CD14-positive monocyte (primary cell): ENCODE measurements at regions of chrX and their contacts with region 1.

Region 1: GRCh38 chrX:19739683-19740082 is 147.7 kb downstream of the SH3KBP1 start:
- DNase-seq: peak; percentile 44 to 72 (median 67)
- H3K4me3 ChIP-seq: no peak overlapping the region
- H3K4me3 Mint-ChIP-seq: no peak overlapping the region
- H3K27ac ChIP-seq: peak overlapping the region in 1 of 2 donors; percentile 20
- H3K27ac Mint-ChIP-seq: peak overlapping the region in 1 of 7 donors; percentile 42
- H3K4me1 ChIP-seq: peaks cover 8% of the 10 kb centered on the region in 2 donors
- H3K4me1 Mint-ChIP-seq: peaks cover 10% of the 10 kb centered on the region
- H3K27me3 ChIP-seq: no peaks in the 10 kb centered on the region
- H3K27me3 Mint-ChIP-seq: peaks cover 0 to 5% (median 0%) of the 10 kb centered on the region in 3 donors
- CTCF ChIP-seq: peak; percentile 70

Region 2: DNA sequence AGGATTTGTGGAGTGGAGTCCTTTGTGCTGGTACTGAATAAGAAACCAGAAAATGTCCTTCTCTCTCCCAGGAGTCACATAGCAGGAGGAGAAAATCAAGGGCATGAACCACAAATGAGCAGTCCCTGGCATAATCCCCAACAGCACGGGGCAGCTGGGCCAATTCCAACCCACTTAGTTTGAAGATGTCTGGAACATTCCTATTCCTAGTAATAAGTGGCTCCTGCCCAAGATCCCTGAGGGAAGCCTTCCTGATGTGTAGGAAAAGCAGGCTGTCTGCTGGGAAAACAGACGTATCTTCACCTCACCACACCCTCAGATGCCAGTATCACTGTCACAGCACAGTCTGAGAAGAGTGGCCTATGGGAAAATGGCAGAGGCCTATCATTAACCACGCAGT is 41.6 kb before region 1 on chrX:
- intact Hi-C with region 1: no loop called
- DNase-seq: no peak
- H3K4me3 ChIP-seq: no peak overlapping the region
- H3K4me3 Mint-ChIP-seq: no peak overlapping the region
- H3K27ac ChIP-seq: peak overlapping the region in 1 of 2 donors; percentile 32
- H3K27ac Mint-ChIP-seq: no peak overlapping the region
- H3K4me1 ChIP-seq: no peaks in the 10 kb centered on the region
- H3K4me1 Mint-ChIP-seq: no peaks in the 10 kb centered on the region
- H3K27me3 ChIP-seq: no peaks in the 10 kb centered on the region
- H3K27me3 Mint-ChIP-seq: peaks cover 0 to 6% (median 0%) of the 10 kb centered on the region in 3 donors
- CTCF ChIP-seq: no peak

Region 3: GRCh38 chrX:19785647-19786046 is 46.0 kb after region 1 on chrX:
- intact Hi-C with region 1: loop called in 1 of 2 experiments (anchors 5 kb)
- DNase-seq: peak; percentile 3 to 66 (median 21)
- H3K4me3 ChIP-seq: no peak overlapping the region
- H3K4me3 Mint-ChIP-seq: no peak overlapping the region
- H3K27ac ChIP-seq: peak overlapping the region in 1 of 2 donors; percentile 8
- H3K27ac Mint-ChIP-seq: peak overlapping the region in 2 of 7 donors; percentile 21 to 37
- H3K4me1 ChIP-seq: peaks cover 9 to 13% of the 10 kb centered on the region in 2 donors
- H3K4me1 Mint-ChIP-seq: peaks cover 25% of the 10 kb centered on the region
- H3K27me3 ChIP-seq: no peaks in the 10 kb centered on the region
- H3K27me3 Mint-ChIP-seq: peaks cover 0 to 5% (median 0%) of the 10 kb centered on the region in 3 donors
- CTCF ChIP-seq: no peak

Region 4: DNA sequence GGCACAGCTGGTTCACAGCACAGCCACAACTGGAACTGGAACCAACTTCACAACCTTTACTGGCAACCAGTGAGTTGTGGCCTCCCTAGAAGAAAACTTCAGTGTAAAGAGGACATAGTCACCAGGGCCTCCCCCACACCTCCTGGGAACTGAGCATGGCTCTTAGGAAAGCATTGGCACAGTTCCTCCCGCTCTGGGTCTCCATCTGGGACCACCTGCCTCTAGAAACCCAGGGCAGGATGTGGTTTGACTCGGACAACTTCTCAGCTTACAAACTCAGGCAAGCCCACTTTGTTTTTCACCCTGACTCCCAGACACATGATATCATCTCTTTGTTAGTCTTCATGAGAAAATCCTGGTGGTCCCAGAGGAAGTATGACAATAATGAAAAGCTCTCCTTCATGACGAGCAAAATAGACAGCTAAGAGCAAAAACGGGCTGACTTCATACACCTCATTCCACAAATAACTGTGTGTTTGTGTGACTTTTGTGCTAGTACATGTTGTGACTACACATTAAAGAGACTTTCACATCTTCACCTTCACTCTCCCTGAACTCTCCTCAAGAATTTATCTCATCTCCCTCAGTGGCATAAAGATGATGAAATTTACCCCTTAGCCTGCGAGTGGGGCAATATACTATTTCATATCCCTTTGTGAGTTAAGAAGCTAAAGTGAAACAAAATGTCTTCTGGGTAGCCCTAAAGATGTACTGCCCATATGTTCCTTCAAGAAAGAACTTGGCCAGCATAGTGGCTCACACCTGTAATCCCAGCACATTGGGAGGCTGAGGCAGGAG is 72.3 kb after region 1 on chrX:
- intact Hi-C with region 1: loop called (anchors 10 kb)
- DNase-seq: peak in 2 of 3 donors; percentile 44
- H3K4me3 ChIP-seq: no peak overlapping the region
- H3K4me3 Mint-ChIP-seq: peak overlapping the region in 1 of 2 donors; percentile 31
- H3K27ac ChIP-seq: peak overlapping the region; percentile 55 to 66
- H3K27ac Mint-ChIP-seq: peak overlapping the region; percentile 69 to 93 (median 86)
- H3K4me1 ChIP-seq: peaks cover 53 to 54% of the 10 kb centered on the region in 2 donors
- H3K4me1 Mint-ChIP-seq: peaks cover 56% of the 10 kb centered on the region
- H3K27me3 ChIP-seq: no peaks in the 10 kb centered on the region
- H3K27me3 Mint-ChIP-seq: peaks cover 0 to 2% (median 0%) of the 10 kb centered on the region in 3 donors
- CTCF ChIP-seq: no peak

Region 5: DNA sequence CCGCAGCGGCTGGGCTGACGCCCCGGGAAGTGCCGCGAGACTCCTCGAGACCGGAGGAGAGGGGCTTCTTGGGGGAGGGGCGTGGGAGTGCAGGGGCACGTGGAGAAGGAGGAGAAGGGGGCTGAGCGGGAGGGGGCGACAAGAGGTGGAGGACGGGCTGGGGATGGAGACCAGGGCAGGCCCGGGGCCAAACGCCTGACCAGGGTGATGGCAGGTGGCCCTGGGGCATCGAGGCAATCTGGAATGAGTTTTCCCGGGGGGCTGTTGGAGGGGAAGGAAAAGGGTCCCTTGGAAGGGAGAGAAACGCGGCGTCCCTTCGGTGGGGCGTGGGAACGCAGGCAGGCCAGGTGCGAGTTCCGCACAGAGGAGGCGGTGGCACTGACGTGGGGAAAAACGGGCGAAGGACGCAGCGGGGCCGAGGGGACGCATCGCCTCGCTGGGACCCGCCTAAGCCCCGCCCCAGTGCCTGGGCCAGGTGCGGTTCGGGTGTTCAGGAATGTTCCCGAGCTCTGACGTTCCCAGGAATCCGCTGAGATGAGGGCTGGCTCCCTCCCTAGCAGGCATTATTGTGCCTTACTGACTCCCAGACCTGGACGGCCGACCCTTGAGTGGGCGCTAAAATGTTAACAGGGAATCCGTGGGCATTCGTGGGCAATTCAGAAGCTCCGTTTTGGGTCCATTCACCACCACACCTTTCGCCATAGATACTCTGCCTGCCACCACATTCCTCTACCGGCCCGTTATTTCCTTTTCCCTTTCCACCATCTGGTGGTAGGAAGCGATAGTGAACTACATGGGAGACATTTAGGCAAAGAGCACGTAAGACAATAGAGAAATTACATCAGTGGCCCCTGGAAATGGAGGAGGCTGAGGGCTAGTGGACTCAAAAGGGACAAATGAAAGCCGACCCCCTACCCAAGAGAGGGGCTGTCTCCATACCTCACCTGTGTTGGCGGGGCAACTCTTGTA is 148.5 kb after region 1 on chrX:
- intact Hi-C with region 1: loop called (anchors 5 to 10 kb)
- DNase-seq: peak; percentile 60 to 74 (median 67)
- H3K4me3 ChIP-seq: peak overlapping the region; percentile 56 to 79 (median 57)
- H3K4me3 Mint-ChIP-seq: peak overlapping the region; percentile 84 to 88
- H3K27ac ChIP-seq: peak overlapping the region in 1 of 2 donors; percentile 55
- H3K27ac Mint-ChIP-seq: peak overlapping the region in 6 of 7 donors; percentile 35 to 85 (median 68)
- H3K4me1 ChIP-seq: peaks cover 35 to 42% of the 10 kb centered on the region in 2 donors
- H3K4me1 Mint-ChIP-seq: peaks cover 29% of the 10 kb centered on the region
- H3K27me3 ChIP-seq: no peaks in the 10 kb centered on the region
- H3K27me3 Mint-ChIP-seq: peaks cover 0 to 16% (median 1%) of the 10 kb centered on the region in 3 donors
- CTCF ChIP-seq: peak; percentile 45